Activated CD8-positive, alpha-beta memory T cell treated with anti-CD3 and anti-CD28 coated beads, Interleukin-2, amount 10 ng/mL, durations not matched to agents 7 days and 5 days (primary cell): ENCODE measurements at regions of chr16 and their contacts with region 1.

Region 1: GRCh38 chr16:58336332-58337089 is 41.7 kb upstream of the PRSS54 start:
- DNase-seq: peak; percentile 89
- ATAC-seq: peak; percentile 92
- H3K4me3 Mint-ChIP-seq: no peak overlapping the region
- H3K27ac Mint-ChIP-seq: no peak overlapping the region
- H3K4me1 Mint-ChIP-seq: peaks cover 5% of the 10 kb centered on the region
- H3K27me3 Mint-ChIP-seq: peaks cover 8% of the 10 kb centered on the region

Region 2: DNA sequence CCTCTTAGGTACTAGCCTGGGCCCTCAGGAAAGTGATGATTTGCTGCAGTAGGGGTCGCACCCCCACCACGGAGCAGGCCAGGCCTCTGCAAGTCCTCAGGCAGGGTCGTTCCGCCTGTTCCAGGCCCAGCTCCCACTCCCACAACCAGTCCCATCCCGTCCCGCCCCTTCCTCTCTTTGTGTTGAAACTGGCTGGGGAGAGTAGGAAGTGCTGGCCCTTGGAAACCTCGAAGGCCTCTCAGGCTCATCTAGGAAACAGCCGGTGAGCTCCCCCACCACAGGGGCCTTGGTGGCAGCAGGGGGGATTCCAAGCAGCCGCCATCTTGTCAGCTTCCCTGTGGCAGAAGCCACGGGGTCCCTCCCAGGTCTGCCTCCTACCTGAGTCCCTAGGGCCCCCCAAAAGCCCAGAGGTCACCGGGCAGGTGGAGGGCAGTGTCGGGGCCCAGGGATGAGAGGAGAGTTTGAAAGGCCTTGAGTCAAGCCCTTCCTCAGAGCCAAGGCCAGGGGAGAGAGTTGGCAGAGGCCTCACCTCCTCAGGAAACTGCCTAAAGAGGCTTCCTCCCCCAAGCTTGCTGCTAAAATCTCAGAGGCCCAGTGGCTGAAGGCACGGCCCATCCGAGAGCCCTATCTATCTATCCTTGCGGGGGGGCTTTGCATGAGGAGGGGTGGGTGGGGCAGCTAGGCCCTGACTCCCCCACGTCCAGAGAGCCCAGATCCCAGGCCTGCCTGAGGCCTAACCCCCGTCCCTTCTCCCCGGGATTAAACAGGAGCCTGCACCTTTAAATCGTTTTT is 288.8 kb before region 1 on chr16:
- CTCF ChIA-PET with region 1: no interaction called
- DNase-seq: no peak
- ATAC-seq: no peak
- H3K4me3 Mint-ChIP-seq: no peak overlapping the region
- H3K27ac Mint-ChIP-seq: no peak overlapping the region
- H3K4me1 Mint-ChIP-seq: no peaks in the 10 kb centered on the region
- H3K27me3 Mint-ChIP-seq: peaks cover 2% of the 10 kb centered on the region

Region 3: GRCh38 chr16:58187092-58187491 is 149.4 kb before region 1 on chr16:
- CTCF ChIA-PET with region 1: no interaction called
- DNase-seq: no peak
- ATAC-seq: no peak
- H3K4me3 Mint-ChIP-seq: no peak overlapping the region
- H3K27ac Mint-ChIP-seq: no peak overlapping the region
- H3K4me1 Mint-ChIP-seq: peaks cover 14% of the 10 kb centered on the region
- H3K27me3 Mint-ChIP-seq: no peaks in the 10 kb centered on the region

Region 4: DNA sequence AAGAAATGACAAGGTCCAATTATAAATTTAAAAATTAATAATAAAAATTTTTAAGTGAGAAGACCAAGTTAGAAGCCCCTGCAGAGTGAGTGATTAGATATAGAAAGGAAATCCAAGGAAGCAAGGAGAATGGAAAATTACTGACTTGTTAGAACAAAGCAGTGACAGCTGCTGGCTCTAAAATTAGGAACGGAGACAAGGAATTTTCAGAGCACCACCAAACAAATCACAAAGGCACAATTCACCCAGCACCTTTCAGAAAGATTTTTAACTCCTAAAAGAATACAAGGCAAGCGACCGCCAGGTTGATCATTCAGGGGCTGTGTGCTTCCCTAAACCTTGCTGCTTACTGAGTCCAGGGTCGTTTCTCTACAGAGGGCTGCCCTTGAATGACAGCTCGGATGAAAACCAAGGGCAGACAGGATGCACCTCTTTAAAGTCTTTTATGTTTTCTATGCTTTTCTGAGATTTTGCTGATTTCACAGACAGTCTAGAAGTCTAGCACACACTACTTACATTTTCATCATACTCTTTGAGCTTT is 10.4 kb after region 1 on chr16:
- CTCF ChIA-PET with region 1: interaction called, 10 read pairs
- DNase-seq: no peak
- ATAC-seq: no peak
- H3K4me3 Mint-ChIP-seq: no peak overlapping the region
- H3K27ac Mint-ChIP-seq: no peak overlapping the region
- H3K4me1 Mint-ChIP-seq: peaks cover 4% of the 10 kb centered on the region
- H3K27me3 Mint-ChIP-seq: peaks cover 68% of the 10 kb centered on the region

Region 5: DNA sequence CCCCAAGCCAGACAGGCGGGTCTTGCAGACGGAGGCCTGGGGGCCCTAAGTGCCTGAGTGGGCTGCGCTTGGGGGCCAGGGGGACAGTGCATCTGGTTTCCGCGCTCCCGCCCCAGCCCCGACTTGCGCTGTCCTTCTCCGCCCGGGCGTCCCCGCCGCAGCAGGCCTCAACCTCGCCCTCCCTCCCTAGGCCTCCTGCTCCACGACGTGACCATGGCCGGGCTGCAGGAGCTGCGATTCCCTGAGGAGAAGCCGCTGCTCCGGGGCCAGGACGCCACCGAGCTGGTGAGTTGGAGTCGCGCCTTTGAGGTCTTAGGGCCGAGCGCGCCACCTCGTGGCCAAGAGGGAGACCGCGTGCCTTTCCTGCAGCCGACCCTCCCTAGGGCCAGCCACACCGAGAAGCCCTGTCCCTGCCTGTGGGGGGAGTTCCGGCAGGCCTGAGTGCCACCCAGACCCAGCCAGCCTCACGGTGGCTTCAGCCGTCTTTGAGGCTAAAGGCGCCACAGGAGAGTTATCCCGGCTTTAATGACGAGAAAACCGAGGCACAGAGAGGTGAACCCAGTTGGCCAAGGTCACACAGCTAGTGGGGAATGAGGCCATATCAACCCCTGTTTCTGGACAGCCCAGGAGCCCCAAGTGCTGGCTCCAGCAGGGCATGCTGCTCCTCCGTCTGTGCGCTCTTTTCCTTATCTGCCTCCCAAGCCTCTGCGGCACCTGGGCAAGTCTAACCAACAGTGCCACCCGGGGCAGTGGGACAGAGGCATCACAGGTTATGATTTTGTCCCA is 151.2 kb after region 1 on chr16:
- CTCF ChIA-PET with region 1: interaction called, 113 read pairs
- DNase-seq: peak; percentile 78
- ATAC-seq: peak; percentile 90
- H3K4me3 Mint-ChIP-seq: no peak overlapping the region
- H3K27ac Mint-ChIP-seq: no peak overlapping the region
- H3K4me1 Mint-ChIP-seq: no peaks in the 10 kb centered on the region
- H3K27me3 Mint-ChIP-seq: peaks cover 9% of the 10 kb centered on the region

Region 6: GRCh38 chr16:58661199-58661830 is 324.8 kb after region 1 on chr16:
- CTCF ChIA-PET with region 1: interaction called, 10 read pairs
- DNase-seq: peak; percentile 42
- ATAC-seq: peak; percentile 80
- H3K4me3 Mint-ChIP-seq: no peak overlapping the region
- H3K27ac Mint-ChIP-seq: no peak overlapping the region
- H3K4me1 Mint-ChIP-seq: no peaks in the 10 kb centered on the region
- H3K27me3 Mint-ChIP-seq: peaks cover 3% of the 10 kb centered on the region